ENCODE measurements at regions of chr2 and their contacts with region 1.

Region 1: GRCh38 chr2:68594674-68595492 is 48.5 kb upstream of the PROKR1 start:
- DNase-seq: peak; percentile 48
- H3K27ac ChIP-seq: no peak overlapping the region
- CTCF ChIP-seq: peak; percentile 63

Region 2: DNA sequence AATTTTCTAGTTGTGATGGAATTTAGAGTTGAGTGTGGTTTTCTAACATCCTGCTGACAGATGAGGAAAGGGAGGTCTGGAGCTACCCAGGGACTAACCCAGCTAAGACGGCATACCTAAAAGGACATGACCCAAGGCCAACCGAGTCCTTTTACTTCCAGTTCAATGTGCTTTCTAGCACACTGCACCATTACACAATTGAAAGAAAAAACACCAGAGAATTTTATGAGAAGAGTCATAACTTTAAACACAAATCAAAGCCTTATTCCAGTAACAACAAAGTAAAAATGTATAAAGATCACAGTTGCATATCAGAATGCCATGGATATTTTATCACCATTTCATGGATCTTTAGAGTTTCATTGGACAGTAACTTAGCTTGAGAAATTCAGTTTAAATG is 1679.6 kb before region 1 on chr2:
- CTCF ChIA-PET with region 1: no interaction called
- POLR2A ChIA-PET with region 1: no interaction called
- DNase-seq: no peak
- H3K27ac ChIP-seq: no peak overlapping the region
- CTCF ChIP-seq: no peak

Region 3: DNA sequence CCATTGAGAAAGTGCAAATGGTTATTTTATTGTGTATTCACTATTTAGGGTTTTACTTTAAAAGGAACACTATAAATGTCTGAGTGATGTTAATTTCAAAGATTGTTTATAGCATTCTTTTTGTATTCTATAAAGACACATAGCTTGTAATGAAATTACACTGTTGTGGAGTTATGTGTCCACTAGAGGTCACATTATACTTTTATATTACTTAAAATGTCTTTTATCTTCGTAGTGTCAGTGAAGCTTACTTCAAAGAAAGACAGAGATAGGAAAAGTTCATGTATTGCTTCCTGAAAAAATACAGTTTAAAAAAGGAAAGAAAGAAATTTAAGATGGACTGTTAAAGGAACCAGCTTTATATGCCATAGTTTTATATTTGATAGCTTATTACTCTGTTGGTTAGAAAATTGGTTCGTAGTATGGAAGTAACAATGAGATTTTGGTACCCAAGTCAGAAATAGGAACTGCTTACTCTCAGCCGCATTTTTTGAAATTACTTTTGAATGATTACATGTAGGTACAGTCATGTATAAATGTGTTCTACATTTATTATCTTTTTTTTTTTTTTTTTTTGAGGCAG is 107.0 kb before region 1 on chr2:
- CTCF ChIA-PET with region 1: interaction called, 12 read pairs
- POLR2A ChIA-PET with region 1: no interaction called
- DNase-seq: peak; percentile 27
- H3K27ac ChIP-seq: no peak overlapping the region
- CTCF ChIP-seq: peak; percentile 66; the same call in 1 of the 2 replicates

Measured in RWPE1 (cell line).